GM13977 (cell line): ENCODE measurements at regions of chr19 and their contacts with region 1.

Region 1: DNA sequence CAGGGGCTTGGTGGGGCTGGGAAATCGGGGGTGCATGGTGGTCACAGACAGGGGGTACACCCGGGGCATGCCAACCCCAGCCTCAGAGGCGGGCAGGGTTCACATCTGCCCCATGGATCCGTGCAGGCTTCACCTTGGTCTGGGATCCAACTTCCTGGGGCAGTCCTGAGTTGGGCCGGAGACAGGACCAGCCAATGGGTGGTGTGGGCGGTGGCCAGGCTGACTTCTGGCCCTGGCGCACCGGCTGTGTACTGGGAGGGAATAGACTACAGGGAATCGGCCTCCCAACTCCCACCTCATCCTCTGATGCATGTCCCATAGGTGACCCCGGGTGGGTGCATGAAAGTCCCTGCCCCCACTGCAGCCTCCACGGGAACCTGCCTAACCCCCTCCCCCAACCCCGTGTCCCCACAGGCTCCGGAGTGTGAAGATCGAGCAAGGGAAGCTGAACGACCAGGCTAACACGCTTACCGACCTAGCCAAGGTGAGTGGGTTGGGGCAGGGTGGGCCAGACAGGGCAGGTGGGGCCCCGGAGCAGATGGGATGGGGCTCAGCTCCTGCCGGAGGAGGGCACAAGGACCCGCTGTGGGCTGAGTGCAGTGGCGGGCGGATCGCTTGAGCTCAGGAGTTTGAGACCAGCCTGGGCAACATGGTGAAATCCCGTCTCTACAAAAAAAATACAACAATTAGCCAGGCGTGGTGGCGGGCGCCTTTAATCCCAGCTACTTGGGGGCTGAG is 14.7 kb upstream of the ARRDC2 start:
- DNase-seq: no peak
- CTCF ChIP-seq: no peak

Region 2: DNA sequence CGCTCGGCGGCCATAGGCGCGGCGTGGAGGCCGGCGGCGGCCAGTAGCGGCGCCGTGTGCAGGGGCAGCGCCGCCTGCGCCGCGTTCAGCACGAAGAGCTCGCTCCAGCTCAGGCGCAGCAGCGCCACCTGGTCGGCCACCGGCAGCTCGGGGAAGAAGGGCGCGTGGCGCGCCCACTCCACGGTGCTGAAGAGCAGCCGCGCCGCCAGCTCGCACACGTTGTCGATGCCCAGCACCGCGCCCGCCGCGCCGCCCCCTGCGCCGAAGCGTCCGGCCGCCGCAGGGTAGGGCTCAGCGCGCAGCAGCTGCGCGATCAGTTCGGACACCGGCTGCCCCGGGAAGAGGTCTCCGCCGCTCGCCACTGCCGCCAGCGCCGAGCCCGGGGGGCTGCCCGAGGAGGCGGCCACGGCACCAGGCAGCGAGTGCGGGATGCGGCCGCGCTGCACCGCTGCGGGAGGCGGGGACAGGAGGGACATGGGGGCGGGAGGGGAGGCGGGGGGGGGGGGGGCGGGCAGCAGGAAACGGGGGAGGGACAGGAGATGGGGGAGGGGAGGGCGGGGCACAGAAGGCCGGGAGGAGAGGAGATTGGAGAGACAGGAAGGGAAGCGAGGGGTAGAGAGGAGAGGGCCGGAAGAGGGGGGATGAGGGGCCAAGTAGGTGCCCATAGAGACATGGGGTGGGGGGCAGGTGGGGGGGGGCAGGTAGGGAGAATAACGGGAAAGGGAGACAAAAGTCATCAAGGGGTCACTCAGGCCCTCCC is 757.4 kb before region 1 on chr19:
- in situ Hi-C with region 1: no loop called
- DNase-seq: peak; percentile 84
- CTCF ChIP-seq: peak; percentile 91

Region 3: GRCh38 chr19:17926044-17926443 is 67.2 kb before region 1 on chr19:
- in situ Hi-C with region 1: no loop called
- DNase-seq: peak; percentile 29
- CTCF ChIP-seq: no peak

Region 4: DNA sequence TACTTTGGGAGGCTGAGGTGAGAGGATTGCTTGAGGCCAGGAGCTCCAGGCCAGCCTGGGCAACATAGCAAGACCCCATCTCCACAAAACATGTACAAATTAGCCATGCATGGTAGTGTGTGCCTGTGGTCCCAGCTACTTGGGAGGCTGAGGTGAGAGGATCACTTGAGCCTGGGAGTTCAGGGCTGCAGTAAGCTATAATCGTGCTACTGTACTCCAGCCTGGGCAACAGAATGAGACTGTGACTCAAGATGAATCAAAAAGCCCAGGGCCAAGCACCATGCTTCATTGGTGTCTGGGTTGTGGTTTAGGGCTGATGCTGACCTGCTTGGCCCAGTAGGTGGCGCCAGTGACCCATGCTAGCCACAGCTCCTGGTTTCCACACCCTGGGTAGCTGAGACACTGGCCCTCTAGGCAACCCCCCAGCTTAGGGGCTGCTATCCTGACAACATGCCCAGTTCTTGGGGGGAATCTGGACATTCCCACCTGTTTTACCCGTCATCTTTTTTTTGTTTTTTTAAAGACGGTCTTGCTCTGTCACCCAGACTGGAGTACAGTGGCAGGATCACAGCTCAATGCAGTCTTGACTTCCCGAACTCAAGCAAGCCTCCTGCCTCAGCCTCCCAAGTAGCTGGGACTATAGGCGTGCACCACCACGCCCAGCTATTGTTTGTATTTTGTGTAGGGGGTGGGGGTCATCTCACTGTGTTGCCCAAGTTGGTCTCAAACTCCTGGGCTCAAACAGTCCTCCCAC is 55.0 kb before region 1 on chr19:
- in situ Hi-C with region 1: loop called (anchors 5 kb)
- DNase-seq: peak; percentile 92
- CTCF ChIP-seq: peak; percentile 95